Breast epithelium (tissue), 4 donors: ENCODE measurements at regions of chr6 and their contacts with region 1.

Region 1: DNA sequence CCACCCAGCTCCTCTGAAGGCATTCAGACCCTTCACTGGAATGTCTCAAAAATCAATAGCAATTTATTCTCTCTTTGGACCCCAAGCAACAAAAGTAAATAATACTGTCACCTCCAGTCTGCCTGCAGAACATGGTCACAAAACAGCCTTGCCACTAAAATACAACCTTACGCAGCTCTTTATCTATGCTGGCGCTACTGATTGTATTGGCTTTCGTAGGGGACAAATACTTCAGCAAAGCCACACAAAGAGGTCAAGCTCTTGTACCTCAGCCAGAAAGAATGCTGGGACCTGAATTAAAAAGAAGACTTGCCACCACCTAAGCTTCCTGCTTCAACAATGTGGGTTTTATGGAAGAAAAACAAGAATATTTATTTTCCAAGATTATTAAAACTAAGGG is 57.2 kb downstream of the PRKN start:
- DNase-seq: no peak
- H3K4me3 ChIP-seq: no peak overlapping the region
- H3K27ac ChIP-seq: no peak overlapping the region
- H3K4me1 ChIP-seq: no peaks in the 10 kb centered on the region
- H3K27me3 ChIP-seq: no peaks in the 10 kb centered on the region
- CTCF ChIP-seq: no peak
- POLR2A ChIP-seq: no peak

Region 2: DNA sequence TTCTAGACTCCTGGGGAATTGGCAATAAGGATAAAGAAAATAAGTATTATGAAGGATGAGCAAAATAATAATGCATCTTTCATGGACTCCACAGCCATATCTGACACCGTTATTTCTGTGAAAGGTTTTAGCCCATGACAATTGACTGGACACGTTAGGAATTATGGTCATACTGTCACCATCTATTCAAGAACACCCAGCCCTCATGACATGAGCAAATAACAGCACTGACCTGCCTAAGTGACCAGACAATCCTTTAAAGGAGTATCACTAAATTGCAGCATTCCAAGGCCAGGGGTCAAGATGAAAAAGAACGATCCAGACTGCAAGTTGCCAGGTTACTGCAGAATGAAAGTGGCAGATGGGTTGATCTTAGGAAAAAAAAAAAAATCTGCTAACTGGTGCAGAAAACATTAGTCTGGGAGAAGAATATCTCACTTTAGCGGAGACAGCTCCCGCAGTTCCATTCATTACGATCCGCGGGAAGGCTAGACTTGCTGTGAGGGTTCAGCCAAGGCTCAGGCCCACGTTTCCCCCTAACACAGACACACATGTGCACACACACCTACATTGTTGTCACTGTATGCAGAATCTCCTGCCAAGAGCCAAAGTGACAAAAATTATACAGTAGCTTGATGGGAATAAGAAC is 1158.8 kb before region 1 on chr6:
- intact Hi-C with region 1: loop called (anchors 10 kb)
- DNase-seq: no peak
- H3K4me3 ChIP-seq: no peak overlapping the region
- H3K27ac ChIP-seq: no peak overlapping the region
- H3K4me1 ChIP-seq: no peaks in the 10 kb centered on the region
- H3K27me3 ChIP-seq: no peaks in the 10 kb centered on the region
- CTCF ChIP-seq: no peak
- POLR2A ChIP-seq: no peak

Region 3: GRCh38 chr6:162251257-162251656 is 419.1 kb before region 1 on chr6:
- intact Hi-C with region 1: loop called (anchors 5 kb)
- DNase-seq: no peak
- H3K4me3 ChIP-seq: no peak overlapping the region
- H3K27ac ChIP-seq: no peak overlapping the region
- H3K4me1 ChIP-seq: no peaks in the 10 kb centered on the region
- H3K27me3 ChIP-seq: no peaks in the 10 kb centered on the region
- CTCF ChIP-seq: no peak
- POLR2A ChIP-seq: no peak

Region 4: GRCh38 chr6:162404951-162405350 is 265.4 kb before region 1 on chr6:
- intact Hi-C with region 1: no loop called
- DNase-seq: no peak
- H3K4me3 ChIP-seq: no peak overlapping the region
- H3K27ac ChIP-seq: no peak overlapping the region
- H3K4me1 ChIP-seq: no peaks in the 10 kb centered on the region
- H3K27me3 ChIP-seq: no peaks in the 10 kb centered on the region
- CTCF ChIP-seq: no peak
- POLR2A ChIP-seq: no peak

Region 5: DNA sequence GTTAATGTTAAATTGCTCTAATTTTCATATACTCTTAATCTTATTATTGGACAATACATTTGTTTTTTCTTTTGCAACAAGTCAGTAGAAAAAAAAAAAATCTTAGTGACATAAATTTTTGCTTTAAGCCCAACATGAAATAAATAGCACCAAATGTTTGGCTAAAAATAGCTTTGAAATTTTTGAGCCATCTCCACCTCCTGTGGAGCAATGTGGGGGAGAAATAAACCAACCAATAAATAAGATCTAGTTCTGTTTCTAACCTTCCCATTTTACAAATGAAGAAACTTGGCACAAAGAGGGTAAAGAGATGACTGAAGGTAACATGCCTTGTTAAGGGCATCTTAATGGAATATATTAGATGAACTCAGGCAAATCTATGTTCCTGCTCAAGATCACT is 34.2 kb before region 1 on chr6:
- intact Hi-C with region 1: no loop called
- DNase-seq: no peak
- H3K4me3 ChIP-seq: no peak overlapping the region
- H3K27ac ChIP-seq: no peak overlapping the region
- H3K4me1 ChIP-seq: no peaks in the 10 kb centered on the region
- H3K27me3 ChIP-seq: no peaks in the 10 kb centered on the region
- CTCF ChIP-seq: no peak
- POLR2A ChIP-seq: no peak